ENCODE measurements at regions of chr12 and their contacts with region 1.

Region 1: DNA sequence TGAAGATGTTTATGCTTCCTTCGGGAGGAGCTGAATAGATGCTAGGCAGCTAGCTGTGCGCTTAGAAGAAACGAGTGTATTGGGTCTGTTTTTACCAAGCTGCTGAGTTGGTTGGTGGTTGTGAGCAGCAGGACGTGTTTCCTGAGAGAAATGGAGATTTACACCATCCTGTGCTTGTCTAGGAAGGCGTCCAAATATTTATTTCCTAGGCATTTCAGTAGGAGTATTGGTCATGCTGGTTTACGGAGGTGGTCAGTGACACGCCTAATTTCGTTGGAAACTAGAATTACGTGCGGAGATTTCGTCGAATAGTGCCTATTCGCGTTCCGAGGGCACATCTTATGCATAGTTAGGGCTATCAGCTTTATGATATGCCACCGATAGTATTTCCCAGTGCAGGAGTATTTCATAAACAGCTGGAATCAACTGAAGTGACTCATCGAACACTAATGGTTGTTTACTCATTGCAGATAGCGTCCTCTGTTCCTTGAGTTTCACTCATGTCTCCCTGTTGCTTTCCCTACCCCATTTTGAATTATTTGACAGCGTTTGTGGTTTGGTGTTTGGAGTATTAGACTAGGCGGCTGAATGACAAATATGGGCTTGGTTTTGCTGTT is 780 bp downstream of the TBC1D15 start:
- DNase-seq: peak in 1 of 3 donors; percentile 14
- ATAC-seq: peak; percentile 59
- H3K4me3 ChIP-seq: peak overlapping the region; percentile 61
- H3K4me1 ChIP-seq: peaks cover 16% of the 10 kb centered on the region
- CTCF ChIP-seq: no peak

Region 2: DNA sequence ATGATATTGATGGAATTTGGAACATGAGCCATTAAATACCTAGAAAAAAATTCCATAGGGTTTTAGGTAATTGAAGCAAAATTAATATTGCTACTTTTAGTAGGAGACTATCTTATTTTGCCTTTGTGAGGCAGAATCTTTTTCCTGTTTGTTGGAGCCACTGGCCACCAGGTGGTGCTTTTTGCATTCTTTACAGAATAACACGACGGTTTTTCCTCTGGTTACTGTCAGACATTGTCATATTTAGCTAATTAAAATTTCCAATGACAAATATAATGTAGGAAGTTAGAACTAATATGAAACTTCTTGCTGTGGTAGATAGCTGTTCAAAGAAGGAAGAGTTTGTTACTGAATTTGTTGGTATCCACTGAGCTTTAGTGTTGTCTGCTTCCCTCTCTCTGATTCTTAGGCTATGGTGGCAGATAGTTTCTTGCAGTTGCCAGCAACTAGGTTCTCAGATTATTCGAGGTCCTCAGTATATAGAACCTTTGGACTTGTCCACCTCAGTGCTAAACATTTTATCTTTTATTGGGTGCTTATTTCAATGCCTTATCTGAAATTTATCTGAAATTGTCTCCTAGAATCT is 60.0 kb before region 1 on chr12:
- intact Hi-C with region 1: loop called in 1 of 2 experiments (anchors 10 kb)
- DNase-seq: peak in 2 of 3 donors; percentile 32 to 73
- ATAC-seq: peak; percentile 68
- H3K4me3 ChIP-seq: no peak overlapping the region
- H3K4me1 ChIP-seq: no peaks in the 10 kb centered on the region
- CTCF ChIP-seq: peak; percentile 51

Measured in mucosa of descending colon (tissue), 3 donors.